H1 (cell line): ENCODE measurements at regions of chr6 and their contacts with region 1.

Region 1: DNA sequence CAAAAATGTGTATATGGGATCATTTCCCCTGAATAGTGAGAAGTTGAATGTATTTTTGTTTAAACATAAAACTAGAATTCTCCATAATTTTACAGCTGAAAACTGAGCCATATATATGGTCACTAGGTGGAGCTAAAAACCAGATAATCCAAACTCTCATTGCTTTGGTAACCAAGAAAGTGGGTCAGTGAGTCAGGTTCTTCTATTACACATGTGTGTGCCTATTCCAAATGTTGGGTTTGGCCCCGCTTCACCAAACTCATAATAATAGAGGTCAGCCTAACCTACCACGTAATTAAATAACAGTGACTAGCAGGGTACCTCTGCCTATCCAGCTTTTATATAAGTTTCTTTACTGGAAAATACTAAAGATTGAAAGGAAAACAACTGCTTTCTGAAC is 19.3 kb upstream of the RNGTT start:
- DNase-seq: no peak
- H3K4me3 ChIP-seq: no peak overlapping the region
- H3K27ac ChIP-seq: no peak overlapping the region
- H3K4me1 ChIP-seq: peaks cover 0 to 2% (median 0%) of the 10 kb centered on the region in 4 experiments; a peak in 1 of 7 replicates
- H3K27me3 ChIP-seq: peaks cover 0 to 1% (median 0%) of the 10 kb centered on the region in 4 experiments; a peak in 2 of 7 replicates
- CTCF ChIP-seq: peak in 2 of 3 experiments; percentile 56 to 67; a peak in 3 of 4 replicates
- EP300 ChIP-seq: no peak
- POLR2A ChIP-seq: no peak
- RAD21 ChIP-seq: peak; percentile 86 to 89

Region 2: GRCh38 chr6:89010825-89011224 is 28.1 kb after region 1 on chr6:
- CTCF ChIA-PET with region 1: interaction called, 15 read pairs
- POLR2A ChIA-PET with region 1: no interaction called
- DNase-seq: no peak
- H3K4me3 ChIP-seq: no peak overlapping the region
- H3K27ac ChIP-seq: no peak overlapping the region
- H3K4me1 ChIP-seq: peaks cover 3 to 11% (median 6%) of the 10 kb centered on the region in 4 experiments; a peak in 6 of 7 replicates
- H3K27me3 ChIP-seq: no peaks in the 10 kb centered on the region
- CTCF ChIP-seq: no peak
- EP300 ChIP-seq: no peak
- POLR2A ChIP-seq: no peak
- RAD21 ChIP-seq: no peak

Region 3: DNA sequence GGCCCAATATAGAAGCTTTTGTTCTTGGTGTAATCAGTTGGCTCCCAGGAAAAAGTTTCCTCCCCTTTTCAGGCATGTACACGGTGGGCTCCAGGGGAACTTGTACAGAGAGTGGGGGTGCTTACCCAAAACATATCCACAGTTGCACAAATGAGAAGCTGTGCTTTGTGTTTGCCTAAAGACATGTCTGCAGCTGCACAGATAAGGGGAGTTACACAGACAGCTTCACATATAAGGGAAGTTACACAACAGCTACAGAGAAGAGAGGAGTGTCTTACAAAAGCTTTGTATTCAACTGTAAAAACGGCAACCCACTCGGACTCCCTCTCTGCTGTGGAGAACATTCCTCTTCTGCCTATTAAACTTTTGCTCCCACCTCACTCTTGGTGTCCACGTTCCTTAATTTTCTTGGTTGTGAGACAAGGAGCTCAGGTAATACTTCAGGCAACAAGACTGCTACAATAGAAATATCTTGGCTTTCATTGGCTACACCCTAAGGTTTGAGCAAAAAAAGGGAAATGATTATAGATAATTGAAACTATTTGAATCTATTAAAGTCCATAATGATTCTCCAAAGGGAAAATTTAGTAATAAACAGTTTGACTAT is 90.4 kb after region 1 on chr6:
- CTCF ChIA-PET with region 1: interaction called, 40 read pairs
- POLR2A ChIA-PET with region 1: no interaction called
- DNase-seq: no peak
- H3K4me3 ChIP-seq: no peak overlapping the region
- H3K27ac ChIP-seq: no peak overlapping the region
- H3K4me1 ChIP-seq: no peaks in the 10 kb centered on the region
- H3K27me3 ChIP-seq: no peaks in the 10 kb centered on the region
- CTCF ChIP-seq: no peak
- EP300 ChIP-seq: no peak
- POLR2A ChIP-seq: no peak
- RAD21 ChIP-seq: no peak

Region 4: DNA sequence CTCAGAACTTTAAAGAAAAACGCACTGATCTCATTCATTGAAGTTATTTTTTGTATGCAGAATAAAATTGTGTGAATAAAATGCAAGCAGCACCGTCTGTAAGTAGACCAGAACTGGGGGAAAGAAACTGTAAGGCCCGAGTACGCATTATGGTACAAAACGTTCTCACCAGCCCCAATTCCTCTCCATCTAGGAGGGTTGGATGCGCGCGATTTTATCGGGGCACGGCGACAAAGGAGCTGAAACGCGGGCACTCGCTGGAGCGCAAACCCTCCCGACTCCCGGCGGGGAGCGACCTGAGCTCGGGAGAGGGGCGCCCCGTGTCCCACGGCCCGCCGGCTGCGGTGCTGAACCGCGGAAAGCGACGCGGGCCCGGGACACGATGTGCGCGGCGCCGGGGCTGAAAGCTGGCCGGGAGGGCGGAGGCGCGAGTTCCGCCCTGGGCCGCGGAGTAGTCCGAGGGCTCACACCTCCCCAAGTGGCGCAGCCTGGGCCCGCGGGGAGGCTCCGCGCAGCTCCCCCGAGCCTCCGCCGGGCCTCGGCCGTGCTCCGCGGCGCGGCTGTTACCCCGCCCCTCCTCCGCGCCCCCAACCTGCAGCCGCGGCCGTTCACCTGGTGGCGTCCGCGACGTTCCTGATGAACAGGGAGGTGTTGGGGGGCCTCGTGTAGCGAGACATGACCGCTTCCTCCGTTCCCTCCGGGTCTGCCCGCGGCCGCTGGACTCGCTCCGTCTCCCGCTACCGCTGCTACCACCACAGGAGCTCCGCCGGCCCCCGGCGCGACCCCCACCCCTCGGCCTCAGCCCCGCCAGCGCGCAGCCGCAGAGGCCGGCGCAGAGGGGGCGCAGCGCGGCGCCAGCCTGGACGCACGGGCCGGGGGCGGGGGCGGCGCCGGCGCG is 134.7 kb after region 1 on chr6 and contains the start of gene SRSF12:
- CTCF ChIA-PET with region 1: interaction called, 43 read pairs
- POLR2A ChIA-PET with region 1: interaction called, 3 read pairs
- DNase-seq: peak in 1 of 2 experiments; percentile 80
- H3K4me3 ChIP-seq: peak within 1 kb of the TSS; percentile 80 to 87 (median 81)
- H3K27ac ChIP-seq: no peak within 1 kb of the TSS; the same call in 1 of the 2 replicates
- H3K4me1 ChIP-seq: no peaks in the 10 kb centered on the region
- H3K27me3 ChIP-seq: peaks cover 7 to 28% (median 15%) of the 10 kb centered on the region in 4 experiments
- CTCF ChIP-seq: no peak
- EP300 ChIP-seq: no peak
- POLR2A ChIP-seq: 0 out of 3 replicates have a peak, but pooled peaks of 1 of the 2 experiments have one; percentile 21
- RAD21 ChIP-seq: no peak
- total RNA-seq, gene SRSF12: 4.2 and 4.9 TPM in 2 replicates

Region 5: GRCh38 chr6:89154126-89154525 is 171.4 kb after region 1 on chr6:
- CTCF ChIA-PET with region 1: interaction called, 23 read pairs
- POLR2A ChIA-PET with region 1: no interaction called
- DNase-seq: no peak
- H3K4me3 ChIP-seq: no peak overlapping the region
- H3K27ac ChIP-seq: no peak overlapping the region
- H3K4me1 ChIP-seq: no peaks in the 10 kb centered on the region
- H3K27me3 ChIP-seq: no peaks in the 10 kb centered on the region
- CTCF ChIP-seq: no peak
- EP300 ChIP-seq: no peak
- POLR2A ChIP-seq: no peak
- RAD21 ChIP-seq: no peak

Region 6: DNA sequence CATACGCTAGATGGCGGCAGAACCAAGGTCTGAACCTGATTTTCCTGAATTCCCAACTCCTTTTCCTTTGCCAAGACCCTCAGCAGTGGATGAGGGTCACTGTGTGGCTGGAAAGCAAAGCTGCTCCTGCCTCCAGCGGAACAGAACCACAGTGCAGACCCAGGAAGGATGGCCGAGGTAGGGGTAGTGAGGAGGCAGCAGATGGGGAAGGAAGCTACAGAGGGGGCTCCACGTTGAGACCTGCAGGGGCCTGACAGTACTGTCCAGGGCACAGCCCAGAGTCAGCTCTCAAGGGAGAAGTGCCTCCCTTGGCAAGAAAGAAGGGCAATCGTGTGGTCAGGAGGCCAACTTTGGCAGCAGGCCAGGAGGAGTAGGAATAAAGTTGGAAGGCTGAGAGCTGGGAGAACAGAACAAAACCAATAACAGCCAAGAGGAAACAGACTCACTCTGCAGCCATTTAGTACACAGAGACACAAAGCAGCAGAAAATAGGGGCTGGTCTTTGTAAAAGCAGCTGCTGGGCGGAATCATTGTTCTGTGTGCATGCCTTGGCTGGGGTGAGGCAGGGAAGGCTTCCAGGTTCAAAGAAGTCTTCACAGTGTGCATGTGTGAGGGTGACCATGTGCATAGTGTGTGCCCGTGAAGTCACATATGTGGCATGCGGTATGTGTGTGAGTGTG is 329.3 kb after region 1 on chr6:
- CTCF ChIA-PET with region 1: interaction called, 19 read pairs
- POLR2A ChIA-PET with region 1: no interaction called
- DNase-seq: peak; percentile 38 to 80
- H3K4me3 ChIP-seq: no peak overlapping the region
- H3K27ac ChIP-seq: no peak overlapping the region
- H3K4me1 ChIP-seq: peaks cover 0 to 3% (median 1%) of the 10 kb centered on the region in 4 experiments; a peak in 3 of 7 replicates
- H3K27me3 ChIP-seq: no peaks in the 10 kb centered on the region
- CTCF ChIP-seq: peak; percentile 40 to 98 (median 97)
- EP300 ChIP-seq: no peak
- POLR2A ChIP-seq: no peak
- RAD21 ChIP-seq: peak; percentile 92 to 94

Region 7: GRCh38 chr6:89895276-89895874 is 912.7 kb after region 1 on chr6:
- CTCF ChIA-PET with region 1: no interaction called
- POLR2A ChIA-PET with region 1: no interaction called
- DNase-seq: peak in 1 of 2 experiments; percentile 76
- H3K4me3 ChIP-seq: no peak overlapping the region
- H3K27ac ChIP-seq: no peak overlapping the region
- H3K4me1 ChIP-seq: peaks cover 4 to 11% (median 9%) of the 10 kb centered on the region in 4 experiments
- H3K27me3 ChIP-seq: no peaks in the 10 kb centered on the region
- CTCF ChIP-seq: no peak
- EP300 ChIP-seq: no peak
- POLR2A ChIP-seq: no peak
- RAD21 ChIP-seq: peak in 1 of 2 experiments; percentile 20; a peak in 1 of 4 replicates